Aorta (tissue), 5 donors: ENCODE measurements at regions of chr3 and their contacts with region 1.

Region 1: GRCh38 chr3:58217209-58217811 is 6.5 kb upstream of the DNASE1L3 start:
- DNase-seq: peak; percentile 86 to 90
- ATAC-seq: peak; percentile 81
- H3K4me3 ChIP-seq: no peak overlapping the region
- H3K27ac ChIP-seq: no peak overlapping the region
- H3K4me1 ChIP-seq: no peaks in the 10 kb centered on the region
- H3K27me3 ChIP-seq: no peaks in the 10 kb centered on the region

Region 2: DNA sequence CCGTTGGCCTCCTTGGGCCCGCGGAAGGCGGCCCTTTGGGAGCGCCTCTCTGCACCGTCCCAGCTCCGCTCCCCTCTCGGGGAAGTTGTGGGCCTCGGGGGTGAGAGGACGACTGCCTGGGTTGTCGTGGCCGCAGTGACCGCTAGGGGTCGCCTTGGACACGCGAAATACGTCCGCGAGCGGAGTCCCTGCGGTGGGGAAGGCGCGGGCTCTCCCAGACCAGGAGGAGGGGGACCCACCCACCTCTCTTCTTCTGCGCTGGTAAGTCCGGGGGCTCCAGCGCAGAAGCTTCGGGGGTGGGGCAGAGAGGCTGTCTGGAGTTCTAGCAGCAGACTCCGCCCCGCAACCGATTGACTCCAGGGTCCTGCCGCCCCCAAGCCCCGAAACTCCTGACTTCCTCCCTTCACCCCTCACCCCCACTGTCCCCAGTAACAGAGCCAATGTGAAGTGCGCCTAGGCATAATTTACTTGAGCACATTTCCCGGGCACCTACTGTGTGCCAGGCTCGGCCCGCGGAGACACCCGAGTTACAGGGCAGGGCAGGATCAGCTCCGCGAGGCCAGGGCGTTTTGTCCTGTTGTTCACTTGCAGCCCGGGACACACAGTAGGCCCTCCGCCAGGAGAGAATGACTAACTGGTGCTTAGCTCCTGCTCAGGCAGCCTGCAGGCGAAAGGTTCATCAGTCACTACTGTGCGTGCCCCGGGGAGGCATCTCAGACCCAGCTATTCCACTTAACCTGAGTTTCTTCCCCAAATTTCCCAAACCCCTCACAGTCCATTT is 39.4 kb before region 1 on chr3:
- intact Hi-C with region 1: loop called in 1 of 2 experiments (anchors 5 kb)
- DNase-seq: peak; percentile 96 to 99
- ATAC-seq: peak; percentile 92
- H3K4me3 ChIP-seq: no peak overlapping the region
- H3K27ac ChIP-seq: no peak overlapping the region
- H3K4me1 ChIP-seq: no peaks in the 10 kb centered on the region
- H3K27me3 ChIP-seq: no peaks in the 10 kb centered on the region